H1 (cell line): ENCODE measurements at regions of chr1 and their contacts with region 1.

Region 1: GRCh38 chr1:119453021-119453420 is 38.1 kb downstream of the HSD3B2 start:
- DNase-seq: no peak
- H3K4me3 ChIP-seq: no peak overlapping the region
- H3K27ac ChIP-seq: no peak overlapping the region
- H3K4me1 ChIP-seq: peaks cover 0 to 2% (median 0%) of the 10 kb centered on the region in 4 experiments; a peak in 2 of 7 replicates
- H3K27me3 ChIP-seq: no peaks in the 10 kb centered on the region
- CTCF ChIP-seq: no peak
- EP300 ChIP-seq: no peak
- POLR2A ChIP-seq: no peak
- RAD21 ChIP-seq: no peak

Region 2: GRCh38 chr1:119372490-119373086 is 80.4 kb before region 1 on chr1:
- CTCF ChIA-PET with region 1: interaction called, 31 read pairs
- POLR2A ChIA-PET with region 1: no interaction called
- DNase-seq: peak in 1 of 2 experiments; percentile 53
- H3K4me3 ChIP-seq: no peak overlapping the region
- H3K27ac ChIP-seq: no peak overlapping the region
- H3K4me1 ChIP-seq: peaks cover 0 to 3% (median 0%) of the 10 kb centered on the region in 4 experiments; a peak in 2 of 7 replicates
- H3K27me3 ChIP-seq: no peaks in the 10 kb centered on the region
- CTCF ChIP-seq: peak in 2 of 3 experiments; percentile 59 to 64; a peak in 3 of 4 replicates
- EP300 ChIP-seq: no peak
- POLR2A ChIP-seq: no peak
- RAD21 ChIP-seq: peak; percentile 84 to 86

Region 3: GRCh38 chr1:119410961-119411360 is 42.1 kb before region 1 on chr1:
- CTCF ChIA-PET with region 1: no interaction called
- POLR2A ChIA-PET with region 1: no interaction called
- DNase-seq: no peak
- H3K4me3 ChIP-seq: no peak overlapping the region
- H3K27ac ChIP-seq: no peak overlapping the region
- H3K4me1 ChIP-seq: no peaks in the 10 kb centered on the region
- H3K27me3 ChIP-seq: no peaks in the 10 kb centered on the region
- CTCF ChIP-seq: no peak
- EP300 ChIP-seq: no peak
- POLR2A ChIP-seq: no peak
- RAD21 ChIP-seq: no peak